ENCODE measurements at regions of chr6 and their contacts with region 1.

Region 1: DNA sequence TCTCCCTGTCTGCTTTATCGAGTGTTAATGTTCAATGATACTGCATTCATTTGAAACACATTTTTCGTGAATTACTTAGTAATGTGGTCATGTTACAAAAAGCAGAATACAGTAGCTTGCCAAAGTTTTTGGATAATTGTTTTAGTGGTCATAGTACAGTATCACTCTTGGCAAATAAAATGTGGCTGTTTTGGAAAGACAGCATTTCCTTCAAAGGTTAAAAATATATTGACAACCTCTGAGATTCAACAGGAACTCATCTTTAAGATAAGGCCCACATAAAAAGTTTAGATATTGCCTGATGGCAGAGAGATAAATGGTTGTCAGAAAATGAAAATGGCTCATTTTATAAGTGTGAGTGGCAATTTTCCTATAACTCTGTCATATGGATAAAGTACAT is 297.7 kb upstream of the MAN1A1 start:
- DNase-seq: no peak
- H3K4me3 ChIP-seq: no peak overlapping the region
- H3K27ac ChIP-seq: no peak overlapping the region
- H3K4me1 ChIP-seq: no peaks in the 10 kb centered on the region
- H3K27me3 ChIP-seq: no peaks in the 10 kb centered on the region
- CTCF ChIP-seq: no peak
- POLR2A ChIP-seq: no peak

Region 2: GRCh38 chr6:118618679-118619377 is 1028.5 kb before region 1 on chr6:
- intact Hi-C with region 1: loop called (anchors 5 kb)
- DNase-seq: no peak
- H3K4me3 ChIP-seq: no peak overlapping the region
- H3K27ac ChIP-seq: no peak overlapping the region
- H3K4me1 ChIP-seq: no peaks in the 10 kb centered on the region
- H3K27me3 ChIP-seq: no peaks in the 10 kb centered on the region
- CTCF ChIP-seq: peak; percentile 44 to 58 (median 53)
- POLR2A ChIP-seq: no peak

Region 3: GRCh38 chr6:119658917-119659316 is 11.6 kb after region 1 on chr6:
- intact Hi-C with region 1: loop called (anchors 1 kb)
- DNase-seq: no peak
- H3K4me3 ChIP-seq: no peak overlapping the region
- H3K27ac ChIP-seq: no peak overlapping the region
- H3K4me1 ChIP-seq: no peaks in the 10 kb centered on the region
- H3K27me3 ChIP-seq: no peaks in the 10 kb centered on the region
- CTCF ChIP-seq: no peak
- POLR2A ChIP-seq: no peak